ENCODE measurements at regions of chr15 and their contacts with region 1.

Region 1: GRCh38 chr15:38817427-38818156 is 253.0 kb upstream of the RASGRP1 start:
- DNase-seq: peak; percentile 80
- H3K4me3 ChIP-seq: no peak overlapping the region
- H3K27ac ChIP-seq: no peak overlapping the region
- H3K4me1 ChIP-seq: peaks cover 8% of the 10 kb centered on the region
- H3K27me3 ChIP-seq: no peaks in the 10 kb centered on the region
- CTCF ChIP-seq: peak; percentile 100

Region 2: GRCh38 chr15:38991126-38991525 is 173.5 kb after region 1 on chr15:
- intact Hi-C with region 1: loop called (anchors 5 kb)
- DNase-seq: no peak
- H3K4me3 ChIP-seq: no peak overlapping the region
- H3K27ac ChIP-seq: peak overlapping the region; percentile 58
- H3K4me1 ChIP-seq: peaks cover 38% of the 10 kb centered on the region
- H3K27me3 ChIP-seq: no peaks in the 10 kb centered on the region
- CTCF ChIP-seq: peak; percentile 62